PC-3 (cell line): ENCODE measurements at regions of chr11 and their contacts with region 1.

Region 1: GRCh38 chr11:14907411-14908213 is 15.6 kb upstream of the CYP2R1 start:
- DNase-seq: peak; percentile 65
- ATAC-seq: peak; percentile 92
- H3K4me3 ChIP-seq: 0 out of 2 replicates have a peak overlapping the region, but pooled peaks have one; percentile 21
- H3K27ac ChIP-seq: no peak overlapping the region
- H3K4me1 ChIP-seq: no peaks in the 10 kb centered on the region
- H3K27me3 ChIP-seq: peaks cover 15% of the 10 kb centered on the region; the same call in 1 of the 2 replicates
- CTCF ChIP-seq: peak; percentile 84

Region 2: GRCh38 chr11:14537134-14537599 is 370.4 kb before region 1 on chr11:
- CTCF ChIA-PET with region 1: interaction called, 4 read pairs
- POLR2A ChIA-PET with region 1: no interaction called
- intact Hi-C with region 1: loop called (anchors 5 kb)
- DNase-seq: peak; percentile 55
- ATAC-seq: peak; percentile 31; the same call in 1 of the 2 replicates
- H3K4me3 ChIP-seq: no peak overlapping the region
- H3K27ac ChIP-seq: no peak overlapping the region
- H3K4me1 ChIP-seq: no peaks in the 10 kb centered on the region
- H3K27me3 ChIP-seq: peaks cover 7% of the 10 kb centered on the region; the same call in 1 of the 2 replicates
- CTCF ChIP-seq: peak; percentile 80

Region 3: DNA sequence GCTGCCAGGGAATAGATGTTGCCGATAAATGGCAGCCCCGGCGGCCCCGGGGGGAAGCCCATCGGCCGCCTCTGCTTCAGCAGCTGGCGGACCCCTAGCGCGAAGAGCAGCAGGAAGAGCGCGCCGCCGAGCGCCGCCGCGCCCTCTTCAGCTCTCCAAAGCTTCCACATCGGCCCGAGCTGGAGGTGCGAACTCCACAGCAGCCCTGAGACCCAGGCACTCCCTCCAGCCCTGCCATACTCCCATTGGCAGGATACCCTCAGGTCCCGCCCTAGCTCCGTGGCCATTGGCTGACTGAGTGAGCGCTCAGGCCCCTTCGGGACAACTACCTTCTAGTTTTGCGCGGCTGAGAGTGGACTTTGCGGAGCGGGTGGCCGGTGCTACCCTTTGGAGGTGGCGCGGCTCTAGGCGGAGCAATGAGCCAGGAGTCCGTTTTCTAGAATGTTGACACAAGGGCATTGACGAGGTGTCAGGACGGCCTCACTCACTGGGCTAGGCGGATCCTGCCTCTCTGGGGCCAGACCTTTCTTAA is 15.5 kb before region 1 on chr11 and contains the start of gene CYP2R1:
- CTCF ChIA-PET with region 1: interaction called, 18 read pairs
- POLR2A ChIA-PET with region 1: interaction called, 4 read pairs
- intact Hi-C with region 1: no loop called
- DNase-seq: peak; percentile 97
- ATAC-seq: peak; percentile 95
- H3K4me3 ChIP-seq: peak within 1 kb of the TSS; percentile 75
- H3K27ac ChIP-seq: peak within 1 kb of the TSS; percentile 88
- H3K4me1 ChIP-seq: peaks cover 5% of the 10 kb centered on the region; the same call in 1 of the 2 replicates
- H3K27me3 ChIP-seq: no peaks in the 10 kb centered on the region
- CTCF ChIP-seq: no peak
- total RNA-seq, gene CYP2R1: 7.5 and 17.3 TPM in 2 replicates

Region 4: GRCh38 chr11:15074206-15075161 is 166.9 kb after region 1 on chr11:
- CTCF ChIA-PET with region 1: interaction called, 10 read pairs
- POLR2A ChIA-PET with region 1: no interaction called
- intact Hi-C with region 1: no loop called
- DNase-seq: peak; percentile 64
- ATAC-seq: peak; percentile 81
- H3K4me3 ChIP-seq: no peak overlapping the region
- H3K27ac ChIP-seq: no peak overlapping the region
- H3K4me1 ChIP-seq: no peaks in the 10 kb centered on the region
- H3K27me3 ChIP-seq: peaks cover 14% of the 10 kb centered on the region
- CTCF ChIP-seq: peak; percentile 62

Region 5: DNA sequence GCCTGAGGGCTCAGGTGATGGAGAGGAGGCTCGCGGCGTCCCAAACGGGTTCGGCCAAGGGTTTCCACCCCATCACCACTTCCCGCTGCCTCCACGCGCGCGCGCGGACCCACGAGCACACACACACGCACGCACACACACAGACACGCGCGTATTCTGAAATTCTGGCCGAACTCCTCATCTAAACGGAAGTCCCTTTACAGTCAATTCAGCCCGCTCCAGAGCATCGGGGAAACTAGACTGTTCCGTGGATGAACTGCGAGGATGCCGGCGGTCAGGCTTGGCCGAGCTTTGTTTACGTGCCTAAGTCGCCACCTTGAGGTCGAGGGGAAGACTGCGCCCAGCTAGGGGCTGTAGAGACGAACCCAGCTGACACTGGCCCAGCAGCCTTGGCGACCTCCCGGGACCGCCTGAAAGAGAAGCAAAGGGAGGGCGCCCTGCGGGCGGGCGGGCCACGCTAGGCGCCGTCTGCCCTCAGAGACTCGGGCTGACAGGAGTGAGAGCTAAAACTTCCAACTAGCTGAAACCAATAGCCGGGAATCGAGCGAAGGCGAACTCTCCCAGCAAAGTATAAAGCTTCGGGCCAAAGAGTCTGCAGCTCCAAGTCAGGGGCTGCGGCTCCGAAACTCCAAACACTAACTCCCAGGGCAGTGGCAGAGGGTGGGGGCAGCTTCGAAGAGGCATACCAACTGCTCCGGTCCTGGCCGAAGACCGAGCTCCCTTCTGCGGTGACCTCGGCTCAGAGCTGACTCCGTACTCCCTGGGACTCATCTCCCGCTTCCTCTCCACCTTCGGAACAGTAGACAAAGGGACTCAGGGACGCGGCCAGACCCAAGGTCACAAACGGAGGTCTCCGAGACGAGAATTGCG is 1706.1 kb after region 1 on chr11:
- CTCF ChIA-PET with region 1: interaction called, 11 read pairs
- POLR2A ChIA-PET with region 1: no interaction called
- intact Hi-C with region 1: loop called (anchors 1 kb)
- DNase-seq: peak; percentile 84
- ATAC-seq: peak; percentile 99
- H3K4me3 ChIP-seq: peak overlapping the region; percentile 68
- H3K27ac ChIP-seq: no peak overlapping the region
- H3K4me1 ChIP-seq: peaks cover 13% of the 10 kb centered on the region
- H3K27me3 ChIP-seq: peaks cover 82% of the 10 kb centered on the region
- CTCF ChIP-seq: peak; percentile 83